OCI-LY7 (cell line): ENCODE measurements at regions of chr6 and their contacts with region 1.

Region 1: GRCh38 chr6:125779924-125780539 is 10.7 kb upstream of the NCOA7 start:
- DNase-seq: peak; percentile 95
- H3K4me3 ChIP-seq: peak overlapping the region; percentile 74
- H3K27ac ChIP-seq: peak overlapping the region; percentile 91
- H3K4me1 ChIP-seq: peaks cover 20% of the 10 kb centered on the region
- CTCF ChIP-seq: 0 out of 2 replicates have a peak, but pooled peaks have one; percentile 37

Region 2: GRCh38 chr6:125346201-125346925 is 433.7 kb before region 1 on chr6:
- CTCF ChIA-PET with region 1: no interaction called
- POLR2A ChIA-PET with region 1: interaction called, 19 read pairs
- intact Hi-C with region 1: no loop called
- DNase-seq: peak; percentile 74
- H3K4me3 ChIP-seq: peak overlapping the region; percentile 60
- H3K27ac ChIP-seq: peak overlapping the region; percentile 78
- H3K4me1 ChIP-seq: peaks cover 26% of the 10 kb centered on the region
- CTCF ChIP-seq: no peak

Region 3: DNA sequence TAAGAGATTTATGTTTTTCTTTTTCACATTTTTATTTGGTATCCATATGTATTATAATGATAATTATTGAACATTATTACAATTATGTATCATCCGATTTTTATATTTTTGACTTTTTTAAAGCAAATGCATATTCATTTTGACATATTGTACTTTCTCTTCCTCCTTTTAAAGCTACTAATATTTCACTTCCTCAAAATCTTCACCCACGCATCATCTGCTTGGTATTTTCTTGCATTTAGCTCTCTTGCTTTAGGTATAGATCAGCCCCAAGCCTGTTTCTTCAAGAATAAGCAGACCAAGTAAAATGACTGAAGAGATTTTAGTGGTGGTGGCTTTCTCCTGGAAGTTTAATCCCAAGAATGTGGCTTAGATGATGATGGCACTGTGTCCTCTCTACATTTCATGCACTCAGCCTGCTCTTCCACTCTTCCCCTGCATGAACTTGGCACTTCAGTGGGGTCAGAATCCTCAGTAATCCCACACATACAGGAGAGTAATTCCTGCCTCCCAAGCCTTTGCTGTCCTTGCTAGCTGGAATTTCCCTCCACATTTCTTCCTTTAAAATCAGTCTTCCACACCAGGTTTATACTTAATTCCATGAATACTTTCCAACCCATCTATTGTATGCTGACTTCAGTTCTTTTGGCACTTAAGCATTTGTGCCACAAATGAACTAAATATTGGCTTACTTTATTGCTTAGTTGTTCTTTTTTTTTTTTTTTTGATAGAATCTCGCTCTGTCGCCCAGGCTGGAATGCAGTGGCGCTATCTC is 18.9 kb after region 1 on chr6:
- CTCF ChIA-PET with region 1: interaction called, 10 read pairs
- POLR2A ChIA-PET with region 1: interaction called, 106 read pairs
- intact Hi-C with region 1: no loop called
- DNase-seq: peak; percentile 83
- H3K4me3 ChIP-seq: peak overlapping the region; percentile 58
- H3K27ac ChIP-seq: peak overlapping the region; percentile 97
- H3K4me1 ChIP-seq: peaks cover 99% of the 10 kb centered on the region
- CTCF ChIP-seq: no peak

Region 4: GRCh38 chr6:125974214-125974866 is 194.3 kb after region 1 on chr6:
- CTCF ChIA-PET with region 1: no interaction called
- POLR2A ChIA-PET with region 1: interaction called, 21 read pairs
- intact Hi-C with region 1: loop called (anchors 1 kb)
- DNase-seq: peak; percentile 76
- H3K4me3 ChIP-seq: no peak overlapping the region
- H3K27ac ChIP-seq: no peak overlapping the region
- H3K4me1 ChIP-seq: peaks cover 5% of the 10 kb centered on the region
- CTCF ChIP-seq: peak; percentile 92

Region 5: GRCh38 chr6:126339796-126340609 is 560.0 kb after region 1 on chr6 and contains the start of gene CENPW:
- CTCF ChIA-PET with region 1: no interaction called
- POLR2A ChIA-PET with region 1: no interaction called
- intact Hi-C with region 1: loop called (anchors 1 kb)
- DNase-seq: peak; percentile 95
- H3K4me3 ChIP-seq: peak within 1 kb of the TSS; percentile 87
- H3K27ac ChIP-seq: peak within 1 kb of the TSS; percentile 87
- H3K4me1 ChIP-seq: peaks cover 20% of the 10 kb centered on the region
- CTCF ChIP-seq: peak; percentile 41
- total RNA-seq, gene CENPW: 22.1 and 28.6 TPM in 2 replicates